ENCODE measurements at regions of chr19 and their contacts with region 1.

Region 1: DNA sequence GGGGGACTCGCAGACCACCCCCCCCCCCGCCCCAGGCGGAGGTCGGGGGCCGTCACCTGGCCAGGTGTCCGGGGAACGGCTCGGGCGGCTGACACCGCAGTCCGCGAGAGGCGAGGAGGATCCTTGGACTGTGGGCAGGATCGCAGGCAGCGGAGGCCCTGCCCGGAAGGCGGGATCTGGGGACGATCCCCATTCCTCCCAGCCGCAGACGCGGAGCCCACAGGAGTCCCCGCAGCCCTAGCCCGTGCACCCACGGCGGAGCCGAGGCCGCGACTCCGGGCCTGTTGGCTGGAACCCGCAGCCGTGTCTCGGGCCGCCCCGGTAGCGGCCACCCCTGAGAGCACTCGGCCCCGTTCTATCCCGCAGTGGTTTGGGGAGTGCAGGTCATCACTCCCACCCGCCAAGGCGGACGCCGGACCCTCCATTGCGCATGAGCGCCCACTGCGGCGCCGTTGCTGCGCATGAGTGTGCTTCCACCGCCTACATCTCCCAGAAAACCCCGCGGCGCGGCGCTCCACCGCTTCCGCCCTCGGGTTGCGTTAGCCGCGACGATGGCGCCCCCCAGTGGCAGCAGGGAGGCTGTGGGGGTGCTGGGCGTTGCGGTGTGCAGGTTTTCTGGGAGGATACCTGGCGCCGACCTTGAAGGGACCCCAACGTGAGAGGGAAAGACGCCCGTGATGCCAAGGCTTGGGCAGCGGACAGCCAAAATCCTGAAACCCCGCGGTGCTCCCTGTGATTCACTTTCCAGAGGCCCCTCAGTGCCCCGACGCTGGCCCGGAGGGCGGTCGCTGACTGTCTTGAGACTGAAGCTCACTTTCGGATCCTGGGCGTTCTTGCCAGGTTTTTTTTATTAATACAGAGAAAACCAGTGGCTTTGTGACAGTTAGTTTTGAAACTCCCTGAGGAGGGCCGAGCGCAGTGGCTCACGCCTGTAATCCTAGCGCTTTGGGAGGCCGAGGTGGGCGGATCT is 4.4 kb upstream of the ZNF329 start:
- DNase-seq: peak; percentile 96 to 99
- ATAC-seq: peak; percentile 96 to 98 (median 98)
- H3K4me3 ChIP-seq: peak overlapping the region; percentile 57 to 100 (median 83)
- H3K27ac ChIP-seq: peak overlapping the region; percentile 49 to 99 (median 91)
- H3K4me1 ChIP-seq: peaks cover 0 to 42% (median 28%) of the 10 kb centered on the region in 9 donors
- H3K27me3 ChIP-seq: no peaks in the 10 kb centered on the region
- CTCF ChIP-seq: peak; percentile 91 to 99 (median 97)

Region 2: DNA sequence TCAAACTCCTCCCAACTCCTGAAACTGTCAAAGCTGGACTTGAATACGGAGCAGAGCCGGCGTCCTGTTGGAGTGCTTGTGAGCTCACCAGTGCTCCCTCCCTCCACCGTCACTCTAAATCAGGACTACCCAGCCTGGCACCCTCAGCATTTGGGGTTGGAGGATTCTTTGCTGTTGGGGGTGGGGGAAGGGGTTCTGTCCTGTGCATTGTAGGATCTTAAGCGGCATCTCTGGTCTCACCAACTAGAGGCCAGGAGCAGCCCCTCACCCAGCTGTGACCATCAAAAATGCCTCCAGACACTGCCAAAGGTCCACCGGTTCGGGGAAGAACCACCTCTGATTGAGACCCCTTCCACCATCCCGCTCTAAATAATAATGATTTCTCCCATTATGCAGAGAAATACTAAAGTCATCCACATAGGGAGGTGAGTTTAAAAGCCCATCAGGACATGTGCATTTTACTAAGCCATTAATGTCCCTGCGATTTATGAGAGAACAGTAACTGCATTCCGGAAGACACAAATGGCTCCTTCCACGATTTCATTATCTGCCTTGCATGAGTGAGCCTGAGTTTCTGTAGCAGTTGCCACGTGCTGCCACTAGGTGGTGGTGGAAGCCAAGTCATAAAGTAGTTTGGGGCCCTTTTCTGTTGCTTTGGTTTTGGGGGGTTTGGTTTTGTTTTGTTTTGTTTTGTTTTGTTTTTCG is 1051.2 kb before region 1 on chr19:
- intact Hi-C with region 1: loop called in 2 of 10 experiments (anchors 5 to 10 kb)
- DNase-seq: peak; percentile 39 to 47
- ATAC-seq: peak in 7 of 8 donors; percentile 45 to 73 (median 67)
- H3K4me3 ChIP-seq: peak overlapping the region in 6 of 10 donors; percentile 2 to 25 (median 16)
- H3K27ac ChIP-seq: no peak overlapping the region
- H3K4me1 ChIP-seq: peaks cover 0 to 9% (median 0%) of the 10 kb centered on the region in 9 donors
- H3K27me3 ChIP-seq: peaks cover 0 to 55% (median 27%) of the 10 kb centered on the region in 7 donors
- CTCF ChIP-seq: peak; percentile 77 to 91 (median 87)

Region 3: GRCh38 chr19:57746580-57747471 is 408.1 kb before region 1 on chr19 and contains the start of gene ZNF776:
- intact Hi-C with region 1: loop called in 3 of 10 experiments (anchors 10 kb)
- DNase-seq: peak; percentile 73 to 92
- ATAC-seq: peak; percentile 95 to 99 (median 99)
- H3K4me3 ChIP-seq: peak within 1 kb of the TSS; percentile 71 to 97 (median 88)
- H3K27ac ChIP-seq: peak within 1 kb of the TSS; percentile 55 to 94 (median 88)
- H3K4me1 ChIP-seq: peaks cover 0 to 36% (median 24%) of the 10 kb centered on the region in 9 donors
- H3K27me3 ChIP-seq: no peaks in the 10 kb centered on the region
- CTCF ChIP-seq: peak in 1 of 9 donors; percentile 21
- total RNA-seq, gene ZNF776: 9.5 to 18.0 (median 13.4) TPM

Region 4: DNA sequence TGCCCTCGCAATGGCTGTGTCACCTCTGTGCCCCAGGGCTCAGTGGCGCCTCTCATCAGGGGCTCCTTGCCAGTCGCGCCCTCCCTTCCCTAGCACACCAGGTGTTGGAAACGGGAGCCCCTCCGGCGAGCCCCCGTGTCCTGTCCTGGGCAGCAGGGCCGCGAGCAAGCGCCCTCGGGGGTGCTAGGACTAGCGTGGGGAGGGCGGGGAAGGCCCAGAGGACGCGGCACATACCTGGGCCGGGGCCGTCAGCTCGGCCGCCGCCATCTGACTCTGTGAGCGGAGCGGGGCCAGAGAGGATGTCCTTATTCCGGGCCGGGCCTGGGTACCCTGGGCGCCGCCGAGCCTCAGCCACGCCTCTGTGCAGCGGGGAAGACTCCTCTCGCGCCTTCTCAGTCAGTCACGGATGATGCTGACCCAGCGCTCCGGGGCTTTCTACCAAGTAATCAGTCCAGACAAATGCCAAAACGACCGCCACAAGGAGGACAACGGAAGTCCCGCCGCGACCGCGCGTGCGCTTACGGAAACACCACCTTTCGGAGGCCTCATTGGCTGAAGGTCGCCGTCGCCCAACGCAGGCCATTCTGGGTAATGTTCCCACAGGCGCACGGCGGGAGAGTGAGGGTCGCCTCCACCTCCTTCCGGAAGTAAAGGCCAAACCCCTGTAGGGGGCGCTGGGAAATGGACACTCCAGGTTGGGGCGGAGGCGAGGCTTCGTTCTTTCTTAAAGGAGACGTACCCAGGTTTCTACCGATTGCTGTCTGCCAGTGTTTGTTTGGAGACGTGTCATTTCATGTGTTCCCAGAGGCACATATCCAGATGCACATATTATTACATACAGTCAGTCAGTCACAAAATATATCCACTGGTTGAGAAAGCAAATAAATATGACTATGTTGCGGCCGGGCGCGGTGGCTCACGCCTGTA is 207.5 kb before region 1 on chr19 and contains the start of gene ZNF256:
- intact Hi-C with region 1: loop called in 1 of 10 experiments (anchors 10 kb)
- DNase-seq: peak; percentile 96 to 98
- ATAC-seq: peak; percentile 97 to 100 (median 99)
- H3K4me3 ChIP-seq: peak within 1 kb of the TSS; percentile 79 to 98 (median 94)
- H3K27ac ChIP-seq: peak within 1 kb of the TSS; percentile 59 to 94 (median 88)
- H3K4me1 ChIP-seq: peaks cover 7 to 30% (median 19%) of the 10 kb centered on the region in 9 donors
- H3K27me3 ChIP-seq: no peaks in the 10 kb centered on the region
- CTCF ChIP-seq: peak; percentile 54 to 89 (median 78)
- total RNA-seq, gene ZNF256: 7.5 to 14.9 (median 11.4) TPM

Region 5: GRCh38 chr19:58002384-58003173 is 152.4 kb before region 1 on chr19 and contains the start of gene ZNF606:
- intact Hi-C with region 1: loop called in 1 of 10 experiments (anchors 5 kb)
- DNase-seq: peak; percentile 89
- ATAC-seq: peak; percentile 97 to 99 (median 98)
- H3K4me3 ChIP-seq: peak within 1 kb of the TSS; percentile 69 to 100 (median 92)
- H3K27ac ChIP-seq: peak within 1 kb of the TSS; percentile 81 to 98 (median 94)
- H3K4me1 ChIP-seq: peaks cover 9 to 42% (median 27%) of the 10 kb centered on the region in 9 donors
- H3K27me3 ChIP-seq: no peaks in the 10 kb centered on the region
- CTCF ChIP-seq: no peak
- total RNA-seq, gene ZNF606: 9.4 to 19.1 (median 13.4) TPM

Region 6: DNA sequence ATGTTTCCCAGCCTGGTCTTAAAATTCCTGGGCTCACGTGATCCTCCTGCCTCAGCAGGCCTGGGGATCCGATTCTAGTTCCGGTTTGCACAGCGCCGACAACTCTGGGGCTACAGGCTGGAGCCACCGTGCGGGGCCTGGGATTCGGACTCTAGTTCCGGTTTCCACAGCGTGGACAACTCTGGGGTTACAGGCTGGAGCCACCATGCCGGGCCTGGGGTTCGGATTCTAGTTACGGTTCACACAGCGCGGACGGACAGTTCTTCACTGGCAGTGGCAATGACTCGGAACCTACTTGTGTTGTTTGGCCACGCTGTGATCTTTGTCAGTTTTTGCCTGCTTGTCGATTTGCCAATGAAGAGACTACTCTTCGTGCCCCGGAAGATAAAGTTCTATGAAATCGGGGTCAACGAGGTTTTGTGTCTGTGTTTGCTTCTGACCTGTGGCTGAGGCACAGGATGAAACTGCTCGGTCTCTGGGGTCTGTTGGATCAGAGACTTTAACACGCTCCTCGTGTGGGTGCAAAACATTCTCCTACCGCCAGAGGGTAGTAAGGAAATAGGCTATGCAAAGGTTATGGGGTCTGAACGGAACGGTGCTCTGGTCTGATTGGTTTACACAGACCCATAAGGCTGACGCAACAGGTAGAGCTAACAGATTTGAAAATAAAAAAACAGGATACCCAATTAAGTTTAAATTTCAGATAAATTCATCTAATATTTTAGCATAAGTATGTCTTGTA is 133.3 kb before region 1 on chr19:
- intact Hi-C with region 1: loop called (anchors 1 to 5 kb)
- DNase-seq: peak in 1 of 2 donors; percentile 81
- ATAC-seq: peak; percentile 87 to 96 (median 95)
- H3K4me3 ChIP-seq: no peak overlapping the region
- H3K27ac ChIP-seq: no peak overlapping the region
- H3K4me1 ChIP-seq: no peaks in the 10 kb centered on the region
- H3K27me3 ChIP-seq: peaks cover 0 to 8% (median 0%) of the 10 kb centered on the region in 7 donors
- CTCF ChIP-seq: peak; percentile 64 to 91 (median 80)

Region 7: GRCh38 chr19:58097781-58098681 is 56.9 kb before region 1 on chr19 and contains the start of gene ZSCAN18:
- intact Hi-C with region 1: loop called in 1 of 10 experiments (anchors 5 kb)
- DNase-seq: peak; percentile 98 to 99
- ATAC-seq: peak; percentile 99 to 100 (median 100)
- H3K4me3 ChIP-seq: peak within 1 kb of the TSS; percentile 68 to 100 (median 88)
- H3K27ac ChIP-seq: peak within 1 kb of the TSS; percentile 72 to 99 (median 92)
- H3K4me1 ChIP-seq: peaks cover 0 to 22% (median 11%) of the 10 kb centered on the region in 9 donors
- H3K27me3 ChIP-seq: no peaks in the 10 kb centered on the region
- CTCF ChIP-seq: no peak
- total RNA-seq, gene ZSCAN18: 59.3 to 101 (median 73.2) TPM